GM10248 (cell line): ENCODE measurements at regions of chr2 and their contacts with region 1.

Region 1: GRCh38 chr2:182077451-182078142 is 91.9 kb downstream of the PPP1R1C start:
- DNase-seq: peak; percentile 38
- CTCF ChIP-seq: peak; percentile 48

Region 2: GRCh38 chr2:181686576-181687185 is 390.9 kb before region 1 on chr2:
- CTCF ChIA-PET with region 1: no interaction called
- POLR2A ChIA-PET with region 1: no interaction called
- DNase-seq: no peak
- CTCF ChIP-seq: no peak

Region 3: DNA sequence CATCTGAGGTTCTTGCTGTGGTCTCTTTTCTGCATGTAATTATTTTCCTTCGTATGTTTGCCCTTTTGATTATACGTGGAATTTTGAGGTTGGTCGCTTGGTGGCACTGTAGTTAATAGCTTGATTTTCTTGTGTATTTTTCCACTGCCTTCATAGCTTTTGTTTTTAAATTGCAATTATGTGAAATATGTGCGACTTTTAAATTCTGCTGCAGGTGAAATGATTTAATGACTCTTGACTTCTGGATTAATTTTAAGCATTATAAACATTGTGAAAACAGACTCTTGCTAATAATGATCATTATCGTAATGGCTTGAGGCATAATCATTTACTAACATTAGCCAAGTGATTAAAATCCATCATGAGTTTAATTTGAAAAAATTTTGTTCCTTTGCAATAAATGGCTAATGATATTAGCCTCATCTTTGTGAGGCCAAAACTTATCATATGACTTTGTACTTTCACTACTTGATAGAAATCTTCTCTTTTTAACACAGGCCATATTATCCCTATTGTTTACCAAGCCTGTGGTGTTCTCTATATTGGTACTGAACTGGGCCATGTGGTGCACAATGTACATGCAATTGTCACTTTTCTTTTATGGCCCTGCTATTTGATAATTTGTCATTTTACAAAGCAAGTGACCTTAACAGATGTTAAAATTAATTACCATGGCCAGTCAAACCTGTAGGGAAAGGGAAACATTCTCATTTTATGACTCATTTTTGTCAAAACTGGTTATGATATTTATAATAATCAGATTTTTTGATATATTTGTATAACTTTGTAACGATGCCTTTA is 334.5 kb before region 1 on chr2:
- CTCF ChIA-PET with region 1: interaction called, 58 read pairs
- POLR2A ChIA-PET with region 1: no interaction called
- DNase-seq: peak; percentile 37
- CTCF ChIP-seq: peak; percentile 59

Region 4: DNA sequence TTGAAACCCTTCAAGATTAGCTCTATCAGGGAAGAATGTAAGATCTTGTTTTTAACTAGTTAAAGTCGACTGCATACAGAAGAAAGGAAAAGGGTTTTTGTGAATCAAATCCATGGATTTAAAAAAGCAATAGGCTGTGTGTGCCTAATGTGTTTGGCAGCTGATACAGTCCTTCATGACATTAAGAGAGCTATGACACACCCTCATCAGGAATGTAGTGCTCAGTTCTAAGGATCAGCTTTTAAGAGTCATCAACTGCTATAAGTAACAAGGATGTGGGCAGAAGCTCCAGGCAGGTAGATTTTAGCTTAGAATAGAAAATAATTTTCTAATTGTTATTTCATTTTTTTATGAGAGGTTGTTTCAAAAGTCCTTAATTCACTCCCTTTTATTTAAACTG is 39.0 kb before region 1 on chr2:
- CTCF ChIA-PET with region 1: interaction called, 12 read pairs
- POLR2A ChIA-PET with region 1: no interaction called
- DNase-seq: no peak
- CTCF ChIP-seq: no peak

Region 5: DNA sequence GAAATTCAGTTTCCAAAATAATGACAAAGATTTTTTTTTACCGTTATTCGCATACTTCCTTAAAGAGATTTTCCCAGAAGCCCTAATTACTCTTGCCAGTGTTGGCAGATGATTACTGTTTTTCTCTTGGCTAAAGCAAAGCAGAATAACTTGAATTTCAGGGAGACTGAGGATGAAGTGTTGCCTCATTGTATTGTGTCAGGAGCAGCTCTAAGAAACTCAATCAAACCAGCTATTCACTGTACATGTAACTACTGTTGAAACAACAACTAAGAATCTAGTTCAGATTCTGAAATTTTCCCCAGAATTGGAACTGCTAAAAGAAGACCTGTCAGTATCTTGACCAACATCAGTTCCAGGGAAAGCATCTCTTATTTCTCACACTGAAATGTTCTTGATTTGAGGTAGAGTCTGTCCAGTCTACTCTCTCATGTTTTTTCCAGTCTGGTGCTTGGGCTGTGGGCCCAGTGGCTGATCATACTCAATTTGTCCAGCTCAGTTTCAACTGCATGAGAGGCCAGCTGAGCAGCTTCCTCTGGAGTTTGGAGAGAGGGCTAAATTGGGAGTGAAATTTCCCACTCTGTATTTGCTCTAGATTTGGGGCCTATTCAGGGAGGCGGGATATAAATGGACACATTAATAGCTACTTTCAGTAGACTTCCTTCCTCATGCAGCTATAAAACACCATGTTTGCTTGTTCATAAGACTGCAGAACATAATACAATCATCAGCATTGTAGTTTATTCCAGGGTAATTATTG is 13.4 kb before region 1 on chr2:
- CTCF ChIA-PET with region 1: interaction called, 15 read pairs
- POLR2A ChIA-PET with region 1: no interaction called
- DNase-seq: no peak
- CTCF ChIP-seq: no peak

Region 6: DNA sequence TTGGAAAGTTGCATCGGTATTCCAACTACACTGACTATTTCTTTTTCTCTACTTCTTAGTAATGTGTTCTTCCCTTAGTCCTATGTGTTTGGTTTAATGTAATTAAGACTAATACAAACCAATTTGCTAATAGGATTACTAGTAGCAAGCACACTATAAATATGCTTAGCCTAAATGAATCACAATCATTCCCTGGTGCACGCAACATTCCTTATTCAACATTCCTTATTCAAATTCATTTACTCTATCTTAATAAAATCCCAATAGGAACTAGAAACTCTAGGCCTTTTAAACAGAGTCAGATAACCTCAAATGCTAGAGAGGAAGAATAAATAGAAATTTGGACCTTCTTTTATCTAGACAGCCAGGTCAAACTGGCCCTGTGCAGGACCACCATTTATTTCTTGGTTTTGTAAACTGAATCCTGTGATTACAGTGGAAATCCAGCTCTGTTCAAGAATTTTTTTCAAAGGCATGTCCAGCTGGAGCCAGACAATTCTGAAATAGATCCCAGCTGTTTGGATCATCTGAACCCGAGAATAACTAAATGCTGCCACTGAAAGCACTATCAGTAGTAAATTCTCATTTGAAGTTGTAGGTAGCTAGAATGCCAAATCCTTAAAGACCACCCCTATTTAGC is 11.2 kb after region 1 on chr2:
- CTCF ChIA-PET with region 1: interaction called, 28 read pairs
- POLR2A ChIA-PET with region 1: no interaction called
- DNase-seq: no peak
- CTCF ChIP-seq: no peak